CD4-positive, alpha-beta memory T cell (primary cell): ENCODE measurements at regions of chr9 and their contacts with region 1.

Region 1: GRCh38 chr9:31347082-31347617 is 1037.3 kb upstream of the ACO1 start:
- DNase-seq: peak; percentile 47 to 78 (median 72)
- H3K4me3 ChIP-seq: no peak overlapping the region
- H3K4me3 Mint-ChIP-seq: peak overlapping the region; percentile 18 to 84 (median 72)
- H3K27ac ChIP-seq: peak overlapping the region; percentile 66
- H3K27ac Mint-ChIP-seq: peak overlapping the region; percentile 89 to 97 (median 95)
- H3K4me1 ChIP-seq: peaks cover 54% of the 10 kb centered on the region
- H3K4me1 Mint-ChIP-seq: peaks cover 33 to 52% (median 44%) of the 10 kb centered on the region in 4 donors
- H3K27me3 ChIP-seq: no peaks in the 10 kb centered on the region
- H3K27me3 Mint-ChIP-seq: no peaks in the 10 kb centered on the region

Region 2: DNA sequence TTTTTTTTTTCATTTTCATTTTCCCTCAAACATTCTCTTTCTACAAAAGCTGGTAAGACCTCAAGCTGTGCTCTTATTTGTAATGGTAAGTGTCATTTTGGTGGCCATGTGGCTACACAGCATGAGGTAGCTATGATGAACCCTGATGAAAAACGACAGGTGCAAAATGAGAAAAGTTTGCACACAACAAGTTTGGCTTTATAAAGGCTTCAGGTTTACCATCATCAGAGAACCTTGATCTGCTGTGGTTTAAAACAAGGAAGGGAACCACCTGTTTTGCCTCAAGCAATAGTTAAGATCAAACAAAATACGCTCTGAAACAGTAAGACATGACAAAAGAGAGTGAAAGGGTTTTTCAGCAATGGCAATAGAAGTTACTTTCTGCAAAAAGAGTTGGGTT is 87.3 kb before region 1 on chr9:
- CTCF ChIA-PET with region 1: no interaction called
- POLR2A ChIA-PET with region 1: interaction called, 3 read pairs
- intact Hi-C with region 1: loop called (anchors 5 kb)
- DNase-seq: peak in 4 of 5 donors; percentile 54 to 76 (median 65)
- H3K4me3 ChIP-seq: no peak overlapping the region
- H3K4me3 Mint-ChIP-seq: peak overlapping the region; percentile 19 to 70 (median 54)
- H3K27ac ChIP-seq: no peak overlapping the region
- H3K27ac Mint-ChIP-seq: peak overlapping the region in 6 of 7 donors; percentile 5 to 84 (median 39)
- H3K4me1 ChIP-seq: peaks cover 20% of the 10 kb centered on the region
- H3K4me1 Mint-ChIP-seq: peaks cover 11 to 13% (median 12%) of the 10 kb centered on the region in 4 donors
- H3K27me3 ChIP-seq: no peaks in the 10 kb centered on the region
- H3K27me3 Mint-ChIP-seq: no peaks in the 10 kb centered on the region

Region 3: DNA sequence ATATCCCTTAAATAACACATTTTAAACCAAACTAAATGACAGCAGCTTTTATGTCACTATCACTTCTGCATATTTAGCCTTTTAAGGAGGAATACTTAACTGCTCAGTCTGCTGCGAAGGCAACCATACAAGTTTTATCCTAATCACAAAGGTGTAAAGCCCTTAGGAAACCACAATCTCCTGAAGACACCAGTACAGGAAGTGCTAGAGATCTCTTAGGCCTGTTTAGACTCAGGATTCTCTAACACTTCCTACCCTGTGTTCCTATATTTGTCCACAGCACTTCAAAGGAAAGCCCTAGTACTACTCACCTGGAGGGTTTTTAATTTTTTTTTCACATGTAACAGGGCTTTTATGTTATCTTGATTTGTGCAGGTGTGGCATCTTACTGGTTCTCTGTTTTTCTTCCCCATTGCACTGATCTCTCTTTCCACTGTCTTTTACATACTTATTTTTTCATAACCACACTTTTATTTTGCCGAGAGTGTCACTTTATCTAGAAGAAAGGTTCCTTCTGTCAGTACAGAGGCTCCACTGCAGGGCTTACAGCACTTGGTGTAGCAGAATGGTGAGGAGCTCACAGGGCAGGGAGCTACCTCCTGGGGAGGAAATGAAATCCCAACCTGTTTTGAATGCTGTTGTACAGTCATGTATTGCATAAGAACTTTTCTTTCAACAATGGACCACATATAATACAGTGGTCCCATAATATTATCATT is 23.3 kb before region 1 on chr9:
- CTCF ChIA-PET with region 1: no interaction called
- POLR2A ChIA-PET with region 1: interaction called, 19 read pairs
- intact Hi-C with region 1: no loop called
- DNase-seq: peak in 4 of 5 donors; percentile 26 to 46 (median 34)
- H3K4me3 ChIP-seq: no peak overlapping the region
- H3K4me3 Mint-ChIP-seq: peak overlapping the region; percentile 21 to 77 (median 52)
- H3K27ac ChIP-seq: peak overlapping the region; percentile 43
- H3K27ac Mint-ChIP-seq: peak overlapping the region; percentile 64 to 90 (median 83)
- H3K4me1 ChIP-seq: peaks cover 36% of the 10 kb centered on the region
- H3K4me1 Mint-ChIP-seq: peaks cover 28 to 56% (median 39%) of the 10 kb centered on the region in 4 donors
- H3K27me3 ChIP-seq: no peaks in the 10 kb centered on the region
- H3K27me3 Mint-ChIP-seq: no peaks in the 10 kb centered on the region

Region 4: GRCh38 chr9:31335529-31336234 is 11.5 kb before region 1 on chr9:
- CTCF ChIA-PET with region 1: interaction called, 3 read pairs
- POLR2A ChIA-PET with region 1: interaction called, 37 read pairs
- intact Hi-C with region 1: no loop called
- DNase-seq: peak in 4 of 5 donors; percentile 15 to 46 (median 18)
- H3K4me3 ChIP-seq: no peak overlapping the region
- H3K4me3 Mint-ChIP-seq: peak overlapping the region in 7 of 8 donors; percentile 43 to 79 (median 64)
- H3K27ac ChIP-seq: no peak overlapping the region
- H3K27ac Mint-ChIP-seq: peak overlapping the region; percentile 62 to 89 (median 80)
- H3K4me1 ChIP-seq: peaks cover 35% of the 10 kb centered on the region
- H3K4me1 Mint-ChIP-seq: peaks cover 5 to 28% (median 18%) of the 10 kb centered on the region in 4 donors
- H3K27me3 ChIP-seq: no peaks in the 10 kb centered on the region
- H3K27me3 Mint-ChIP-seq: no peaks in the 10 kb centered on the region

Region 5: GRCh38 chr9:31389075-31389474 is 41.9 kb after region 1 on chr9:
- CTCF ChIA-PET with region 1: interaction called, 3 read pairs
- POLR2A ChIA-PET with region 1: interaction called, 4 read pairs
- intact Hi-C with region 1: loop called (anchors 5 kb)
- DNase-seq: no peak
- H3K4me3 ChIP-seq: no peak overlapping the region
- H3K4me3 Mint-ChIP-seq: no peak overlapping the region
- H3K27ac ChIP-seq: no peak overlapping the region
- H3K27ac Mint-ChIP-seq: no peak overlapping the region
- H3K4me1 ChIP-seq: peaks cover 11% of the 10 kb centered on the region
- H3K4me1 Mint-ChIP-seq: peaks cover 18 to 27% (median 21%) of the 10 kb centered on the region in 4 donors
- H3K27me3 ChIP-seq: no peaks in the 10 kb centered on the region
- H3K27me3 Mint-ChIP-seq: no peaks in the 10 kb centered on the region